GM10248 (cell line): ENCODE measurements at regions of chr5 and their contacts with region 1.

Region 1: GRCh38 chr5:100690096-100690495 is 154.9 kb downstream of the FAM174A start:
- DNase-seq: no peak
- CTCF ChIP-seq: no peak

Region 2: DNA sequence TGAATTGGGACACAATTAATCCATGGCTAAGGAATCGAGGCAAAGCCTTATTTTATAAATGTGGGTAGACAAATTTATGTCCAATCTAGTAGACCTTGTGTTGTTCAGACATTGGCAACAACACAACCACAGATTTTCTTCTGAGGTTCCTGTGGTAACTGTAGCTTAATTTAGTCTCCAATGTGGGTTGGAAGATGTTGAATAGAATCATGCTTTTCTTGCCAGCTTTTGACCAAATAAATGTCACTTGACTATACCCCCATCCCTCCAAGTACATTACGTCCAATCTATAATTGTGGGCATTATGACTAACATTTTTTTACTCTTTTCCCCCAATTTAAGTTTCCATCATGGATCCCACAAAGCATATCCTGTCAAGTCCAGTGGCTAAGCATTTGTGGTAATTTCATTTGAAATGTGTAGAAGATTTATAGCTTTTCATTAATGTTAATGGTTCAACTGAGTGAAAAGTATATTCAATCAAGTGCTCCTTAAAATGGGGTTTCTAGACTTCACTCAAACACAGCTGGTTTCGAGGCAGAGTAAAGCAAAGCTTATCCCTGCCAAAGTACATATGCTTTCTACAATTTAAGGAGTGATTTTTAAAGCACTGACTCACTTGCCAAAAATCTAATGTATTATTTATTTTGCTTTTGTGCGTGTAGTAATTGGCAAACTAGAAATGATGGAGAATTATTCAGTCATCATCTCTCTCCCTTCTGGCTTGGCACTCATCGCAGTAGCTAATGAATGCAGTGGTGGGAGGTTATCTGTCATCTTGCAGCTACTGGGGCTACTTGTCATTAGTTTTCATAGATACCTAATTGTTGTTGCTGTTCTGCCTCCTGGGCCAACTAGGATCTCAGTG is 13.0 kb before region 1 on chr5:
- CTCF ChIA-PET with region 1: interaction called, 11 read pairs
- POLR2A ChIA-PET with region 1: no interaction called
- DNase-seq: no peak
- CTCF ChIP-seq: no peak